ENCODE measurements at regions of chr2 and their contacts with region 1.

Region 1: DNA sequence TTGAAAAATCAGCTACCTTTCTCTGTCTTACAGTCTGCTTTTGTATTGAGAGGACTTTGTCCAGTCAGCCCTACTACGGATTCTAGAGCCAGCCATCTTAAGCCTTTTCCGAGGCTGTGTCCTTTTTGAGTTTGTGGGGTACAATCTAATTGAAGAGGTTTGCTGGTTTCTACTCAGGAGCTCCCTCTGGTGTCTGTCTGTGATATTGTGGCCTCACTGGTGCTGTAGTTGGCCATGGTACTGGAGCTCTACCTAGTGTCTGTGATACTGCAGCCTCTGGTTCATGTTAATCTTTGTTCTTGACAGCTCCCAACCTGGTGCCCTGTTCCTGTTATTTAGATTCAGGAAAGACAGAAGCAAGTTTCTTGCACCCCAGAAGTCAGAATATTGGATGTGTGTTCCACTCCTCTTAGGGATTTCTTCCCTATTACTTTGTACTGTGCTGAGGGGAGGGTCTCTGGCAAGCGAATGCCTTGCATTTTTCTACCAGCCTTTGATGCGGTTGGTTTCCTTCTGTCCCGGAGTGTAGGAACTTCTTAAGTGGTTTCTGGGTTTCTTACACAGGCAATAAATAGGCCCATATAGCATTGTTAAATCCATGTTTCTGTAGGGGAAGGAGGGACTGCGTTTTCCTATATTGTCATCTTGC is 78.5 kb downstream of the ACSL3 start:
- DNase-seq: peak; percentile 81
- ATAC-seq: peak; percentile 86
- H3K4me3 Mint-ChIP-seq: no peak overlapping the region
- H3K27ac Mint-ChIP-seq: no peak overlapping the region
- H3K4me1 Mint-ChIP-seq: peaks cover 8% of the 10 kb centered on the region
- H3K27me3 Mint-ChIP-seq: no peaks in the 10 kb centered on the region

Region 2: GRCh38 chr2:222797261-222797660 is 142.1 kb before region 1 on chr2:
- CTCF ChIA-PET with region 1: interaction called, 17 read pairs
- DNase-seq: no peak
- ATAC-seq: no peak
- H3K4me3 Mint-ChIP-seq: no peak overlapping the region
- H3K27ac Mint-ChIP-seq: no peak overlapping the region
- H3K4me1 Mint-ChIP-seq: no peaks in the 10 kb centered on the region
- H3K27me3 Mint-ChIP-seq: peaks cover 30% of the 10 kb centered on the region

Region 3: GRCh38 chr2:222912117-222912516 is 27.2 kb before region 1 on chr2:
- CTCF ChIA-PET with region 1: interaction called, 13 read pairs
- DNase-seq: no peak
- ATAC-seq: peak; percentile 23
- H3K4me3 Mint-ChIP-seq: no peak overlapping the region
- H3K27ac Mint-ChIP-seq: no peak overlapping the region
- H3K4me1 Mint-ChIP-seq: peaks cover 17% of the 10 kb centered on the region
- H3K27me3 Mint-ChIP-seq: no peaks in the 10 kb centered on the region

Measured in activated CD8-positive, alpha-beta memory T cell treated with anti-CD3 and anti-CD28 coated beads, Interleukin-2, amount 10 ng/mL, durations not matched to agents 7 days and 5 days (primary cell).